ENCODE measurements at regions of chr11 and their contacts with region 1.

Region 1: DNA sequence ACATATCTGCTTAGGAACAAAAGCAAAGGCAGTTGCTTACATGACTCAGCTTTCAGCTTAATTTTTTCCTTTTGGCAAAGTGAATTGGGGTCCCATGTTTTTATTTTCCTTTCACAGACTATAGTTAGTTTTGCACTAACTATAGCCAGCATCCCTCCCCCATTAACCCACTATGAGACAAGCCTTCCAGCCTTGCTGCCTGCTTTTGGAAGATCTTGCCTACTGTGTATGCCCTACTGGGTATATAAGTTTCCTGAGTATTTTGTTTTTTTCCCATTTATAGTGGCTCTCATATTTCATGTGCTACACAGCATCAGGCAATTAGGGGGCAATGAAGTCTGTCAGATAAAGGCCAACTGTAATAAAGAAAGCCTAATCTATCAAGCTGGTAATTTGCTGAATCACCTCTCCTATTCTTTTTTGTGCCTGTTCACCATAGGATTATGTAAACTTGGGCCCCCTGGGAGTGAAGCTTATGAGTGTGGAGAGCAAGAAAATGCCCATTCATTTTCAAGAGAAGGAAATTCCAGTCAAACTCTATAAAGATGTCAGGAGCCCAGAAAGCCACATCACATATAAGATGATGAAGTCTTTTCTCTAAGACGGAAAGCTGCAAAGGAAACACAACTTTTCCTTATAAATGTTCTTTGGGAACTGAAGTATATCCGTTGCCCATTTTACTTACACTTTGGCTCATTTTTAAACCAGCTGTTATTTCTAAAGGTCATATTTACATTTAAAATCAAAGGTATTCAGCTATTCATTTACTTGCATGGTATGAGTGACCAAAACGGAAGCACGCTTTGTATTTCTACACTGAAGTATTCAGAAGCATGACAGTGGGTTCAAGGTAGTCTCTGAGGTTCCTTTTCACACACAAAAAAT is 64.0 kb downstream of the CCDC83 start:
- DNase-seq: no peak
- ATAC-seq: no peak
- H3K4me3 ChIP-seq: no peak overlapping the region
- H3K27ac ChIP-seq: no peak overlapping the region
- H3K4me1 ChIP-seq: no peaks in the 10 kb centered on the region
- H3K27me3 ChIP-seq: peaks cover 4% of the 10 kb centered on the region; the same call in 1 of the 2 replicates
- CTCF ChIP-seq: no peak

Region 2: GRCh38 chr11:85889676-85890579 is 29.2 kb before region 1 on chr11:
- CTCF ChIA-PET with region 1: no interaction called
- POLR2A ChIA-PET with region 1: interaction called, 11 read pairs
- in situ Hi-C with region 1: no loop called
- intact Hi-C with region 1: no loop called
- DNase-seq: no peak
- ATAC-seq: peak; percentile 87
- H3K4me3 ChIP-seq: no peak overlapping the region
- H3K27ac ChIP-seq: no peak overlapping the region
- H3K4me1 ChIP-seq: no peaks in the 10 kb centered on the region
- H3K27me3 ChIP-seq: no peaks in the 10 kb centered on the region
- CTCF ChIP-seq: no peak

Region 3: GRCh38 chr11:86896441-86896841 is 977.3 kb after region 1 on chr11:
- CTCF ChIA-PET with region 1: no interaction called
- POLR2A ChIA-PET with region 1: no interaction called
- in situ Hi-C with region 1: no loop called
- intact Hi-C with region 1: no loop called
- DNase-seq: no peak
- ATAC-seq: no peak
- H3K4me3 ChIP-seq: no peak overlapping the region
- H3K27ac ChIP-seq: no peak overlapping the region
- H3K4me1 ChIP-seq: no peaks in the 10 kb centered on the region
- H3K27me3 ChIP-seq: no peaks in the 10 kb centered on the region
- CTCF ChIP-seq: no peak